Dorsolateral prefrontal cortex (tissue), 120 donors: ENCODE measurements at regions of chr7 and their contacts with region 1.

Region 1: DNA sequence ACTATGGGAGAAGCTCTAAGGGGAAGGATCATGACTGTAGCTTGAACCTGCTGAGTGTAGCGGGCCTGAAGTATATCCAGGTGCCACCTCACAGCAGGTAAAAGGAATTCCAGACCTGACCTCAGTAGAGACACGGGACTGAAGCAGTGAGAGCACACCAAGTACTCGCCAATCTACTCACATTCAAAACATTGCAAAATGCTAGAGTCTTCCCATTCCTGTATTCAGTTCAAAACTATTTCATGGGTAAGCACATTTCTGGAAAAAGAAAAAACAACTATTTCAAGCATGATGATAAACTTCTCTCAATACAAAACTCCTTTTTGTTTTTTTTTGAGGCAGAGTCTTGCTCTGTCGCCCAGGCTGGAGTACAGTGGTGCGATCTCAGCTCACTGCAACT is 121.9 kb upstream of the AUTS2 start:
- DNase-seq: no peak
- H3K4me3 ChIP-seq: no peak overlapping the region
- H3K27ac ChIP-seq: no peak overlapping the region
- H3K27me3 ChIP-seq: no peaks in the 10 kb centered on the region
- CTCF ChIP-seq: no peak

Region 2: DNA sequence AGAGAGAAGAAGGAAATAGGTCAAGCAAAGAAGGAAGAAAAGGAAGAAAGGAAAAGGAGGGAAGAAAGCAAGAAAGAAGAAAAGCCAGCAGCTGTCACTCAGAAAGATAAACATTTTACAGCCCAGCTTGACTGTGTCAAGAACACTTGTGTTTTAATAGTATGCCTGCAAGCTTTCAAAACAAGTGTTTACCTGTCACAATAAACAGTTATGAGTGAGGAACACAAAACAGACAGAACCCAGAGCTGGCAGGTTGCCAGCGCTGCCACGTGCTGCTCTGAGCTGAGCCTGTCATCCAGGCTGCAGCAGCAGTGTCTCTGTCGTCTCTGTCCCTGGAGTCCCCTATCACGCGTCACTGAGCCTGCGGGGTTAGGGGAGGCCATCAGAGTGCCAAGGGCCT is 705.8 kb before region 1 on chr7:
- intact Hi-C with region 1: no loop called
- DNase-seq: peak in 3 of 10 donors; percentile 4 to 44 (median 32)
- H3K4me3 ChIP-seq: no peak overlapping the region
- H3K27ac ChIP-seq: no peak overlapping the region
- H3K27me3 ChIP-seq: peaks cover 0 to 4% (median 0%) of the 10 kb centered on the region in 45 donors
- CTCF ChIP-seq: no peak

Region 3: GRCh38 chr7:69412331-69413078 is 63.9 kb before region 1 on chr7:
- intact Hi-C with region 1: loop called in 1 of 2 experiments (anchors 10 kb)
- DNase-seq: peak in 4 of 10 donors; percentile 12 to 58 (median 55)
- H3K4me3 ChIP-seq: no peak overlapping the region
- H3K27ac ChIP-seq: no peak overlapping the region
- H3K27me3 ChIP-seq: no peaks in the 10 kb centered on the region
- CTCF ChIP-seq: no peak